ENCODE measurements at regions of chr2 and their contacts with region 1.

Region 1: DNA sequence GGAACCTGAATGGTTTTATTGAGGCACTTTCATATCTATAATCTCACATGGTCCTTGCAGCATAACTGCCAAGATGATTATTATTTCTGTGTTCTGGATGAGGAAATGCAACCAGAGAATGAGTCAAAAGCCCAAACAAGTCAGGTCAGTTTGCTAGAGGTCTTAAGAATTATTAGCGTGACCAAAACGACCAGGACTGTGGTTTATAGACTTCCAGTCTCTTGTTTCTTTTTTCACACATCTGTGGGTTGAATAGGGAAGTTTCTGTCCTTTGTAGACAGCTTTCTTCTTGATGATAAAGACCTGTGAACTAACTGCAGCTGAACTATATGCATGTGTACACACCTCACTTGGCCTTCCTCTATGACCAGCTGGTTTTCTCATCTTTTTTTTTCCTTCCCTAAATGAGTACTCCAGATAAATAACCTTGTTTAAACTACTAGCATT is 13.9 kb downstream of the ADAM23 start:
- DNase-seq: no peak
- ATAC-seq: no peak
- H3K4me3 ChIP-seq: no peak overlapping the region
- H3K27ac ChIP-seq: peak overlapping the region in 3 of 10 donors; percentile 16 to 42 (median 20)
- H3K4me1 ChIP-seq: peaks cover 0 to 32% (median 9%) of the 10 kb centered on the region in 9 donors
- H3K27me3 ChIP-seq: no peaks in the 10 kb centered on the region
- CTCF ChIP-seq: no peak

Region 2: GRCh38 chr2:206518997-206519396 is 61.8 kb after region 1 on chr2:
- intact Hi-C with region 1: loop called in 3 of 10 experiments (anchors 5 kb)
- DNase-seq: no peak
- ATAC-seq: no peak
- H3K4me3 ChIP-seq: no peak overlapping the region
- H3K27ac ChIP-seq: no peak overlapping the region
- H3K4me1 ChIP-seq: peaks cover 0 to 18% (median 6%) of the 10 kb centered on the region in 9 donors
- H3K27me3 ChIP-seq: no peaks in the 10 kb centered on the region
- CTCF ChIP-seq: no peak

Region 3: DNA sequence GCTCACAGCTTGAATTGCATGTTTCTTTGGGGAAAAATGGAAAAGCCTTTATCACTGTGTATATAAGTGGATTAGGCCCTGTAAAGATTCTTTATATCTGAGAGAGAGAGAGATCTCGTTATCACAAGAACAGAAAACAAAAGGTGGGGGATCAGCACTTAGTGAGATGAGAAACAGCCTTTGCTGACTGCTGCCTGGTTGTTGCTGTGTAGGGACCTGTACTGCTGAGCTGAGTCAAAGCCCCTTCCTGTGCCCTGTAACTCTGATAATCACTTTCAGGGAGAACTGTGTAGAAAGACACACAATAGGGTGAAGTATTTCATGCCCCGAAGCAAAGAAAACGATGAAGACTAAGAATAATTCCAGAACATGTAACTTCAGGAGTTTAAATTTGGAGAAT is 154.5 kb after region 1 on chr2:
- intact Hi-C with region 1: no loop called
- DNase-seq: no peak
- ATAC-seq: no peak
- H3K4me3 ChIP-seq: no peak overlapping the region
- H3K27ac ChIP-seq: no peak overlapping the region
- H3K4me1 ChIP-seq: peaks cover 0 to 12% (median 0%) of the 10 kb centered on the region in 9 donors
- H3K27me3 ChIP-seq: no peaks in the 10 kb centered on the region
- CTCF ChIP-seq: no peak